HEK293 (cell line): ENCODE measurements at regions of chr6 and their contacts with region 1.

Region 1: GRCh38 chr6:108052706-108053105 is 21.8 kb downstream of the OSTM1 start:
- H3K4me3 ChIP-seq: no peak overlapping the region
- H3K27ac ChIP-seq: no peak overlapping the region
- H3K4me1 ChIP-seq: no peaks in the 10 kb centered on the region
- CTCF ChIP-seq: no peak

Region 2: DNA sequence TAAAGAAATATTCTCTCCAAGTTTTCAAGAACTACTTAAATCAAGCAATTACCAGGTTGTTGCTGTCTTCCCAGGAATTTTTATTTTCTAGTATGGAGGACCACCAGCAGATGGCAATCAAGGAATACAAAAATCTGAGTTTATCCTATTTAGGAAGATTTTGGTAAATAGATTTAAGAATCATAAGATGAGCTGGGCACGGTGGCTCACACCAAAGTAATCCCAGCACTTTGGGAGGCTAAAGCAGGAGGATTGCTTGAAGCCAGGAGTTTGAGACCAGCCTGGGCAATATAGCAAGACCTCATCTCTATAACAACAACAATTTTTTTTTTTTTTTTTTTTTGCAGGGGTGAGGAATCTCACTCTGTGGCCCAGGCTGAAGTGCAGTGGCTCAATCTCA is 75.4 kb before region 1 on chr6:
- CTCF ChIA-PET with region 1: interaction called, 178 read pairs
- POLR2A ChIA-PET with region 1: no interaction called
- H3K4me3 ChIP-seq: no peak overlapping the region
- H3K27ac ChIP-seq: no peak overlapping the region
- H3K4me1 ChIP-seq: no peaks in the 10 kb centered on the region
- CTCF ChIP-seq: 0 out of 2 replicates have a peak, but pooled peaks have one; percentile 11

Region 3: GRCh38 chr6:108068618-108069017 is 15.9 kb after region 1 on chr6:
- CTCF ChIA-PET with region 1: interaction called, 16 read pairs
- POLR2A ChIA-PET with region 1: no interaction called
- H3K4me3 ChIP-seq: no peak overlapping the region
- H3K27ac ChIP-seq: no peak overlapping the region
- H3K4me1 ChIP-seq: no peaks in the 10 kb centered on the region
- CTCF ChIP-seq: no peak

Region 4: DNA sequence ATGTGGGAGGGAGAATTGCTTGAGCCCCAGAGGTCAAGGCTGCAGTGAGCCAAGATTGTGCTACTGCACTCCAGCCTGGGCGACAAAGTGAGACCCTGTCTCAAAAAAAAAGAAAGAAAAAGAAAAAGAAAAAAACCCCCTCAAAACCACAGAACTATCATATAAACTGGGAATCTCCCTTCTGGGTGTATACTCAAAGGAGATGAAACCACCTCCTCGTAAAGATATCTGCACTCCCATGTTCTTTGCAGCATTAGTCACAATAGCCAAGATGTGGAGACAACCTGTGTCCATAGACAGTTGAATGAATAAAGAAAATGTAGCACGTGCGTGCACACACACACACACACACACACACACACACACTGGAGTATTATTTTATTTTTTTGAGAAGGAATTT is 233.7 kb after region 1 on chr6:
- CTCF ChIA-PET with region 1: no interaction called
- POLR2A ChIA-PET with region 1: no interaction called
- H3K4me3 ChIP-seq: no peak overlapping the region
- H3K27ac ChIP-seq: no peak overlapping the region
- H3K4me1 ChIP-seq: no peaks in the 10 kb centered on the region
- CTCF ChIP-seq: no peak